CD8-positive, alpha-beta memory T cell (primary cell): ENCODE measurements at regions of chr16 and their contacts with region 1.

Region 1: GRCh38 chr16:11619327-11619851 is 32.7 kb upstream of the LITAF start:
- DNase-seq: peak in 4 of 5 donors; percentile 13 to 68 (median 58)
- H3K4me3 ChIP-seq: peak overlapping the region; percentile 5
- H3K4me3 Mint-ChIP-seq: peak overlapping the region; percentile 1 to 79 (median 74)
- H3K27ac ChIP-seq: peak overlapping the region; percentile 6
- H3K27ac Mint-ChIP-seq: peak overlapping the region; percentile 91 to 98 (median 96)
- H3K4me1 ChIP-seq: peaks cover 80% of the 10 kb centered on the region
- H3K4me1 Mint-ChIP-seq: peaks cover 52 to 75% (median 58%) of the 10 kb centered on the region in 3 donors
- H3K27me3 ChIP-seq: no peaks in the 10 kb centered on the region
- H3K27me3 Mint-ChIP-seq: no peaks in the 10 kb centered on the region

Region 2: GRCh38 chr16:11556945-11557720 is 62.3 kb before region 1 on chr16:
- CTCF ChIA-PET with region 1: no interaction called
- POLR2A ChIA-PET with region 1: no interaction called
- DNase-seq: peak in 3 of 5 donors; percentile 58 to 61 (median 58)
- H3K4me3 ChIP-seq: no peak overlapping the region
- H3K4me3 Mint-ChIP-seq: peak overlapping the region; percentile 62 to 89 (median 75)
- H3K27ac ChIP-seq: peak overlapping the region; percentile 25
- H3K27ac Mint-ChIP-seq: peak overlapping the region; percentile 77 to 100 (median 98)
- H3K4me1 ChIP-seq: peaks cover 72% of the 10 kb centered on the region
- H3K4me1 Mint-ChIP-seq: peaks cover 65 to 86% (median 73%) of the 10 kb centered on the region in 3 donors
- H3K27me3 ChIP-seq: no peaks in the 10 kb centered on the region
- H3K27me3 Mint-ChIP-seq: peaks cover 0 to 8% of the 10 kb centered on the region in 2 donors

Region 3: GRCh38 chr16:11639925-11640899 is 20.8 kb after region 1 on chr16:
- CTCF ChIA-PET with region 1: interaction called, 11 read pairs
- POLR2A ChIA-PET with region 1: interaction called, 6 read pairs
- DNase-seq: no peak
- H3K4me3 ChIP-seq: no peak overlapping the region
- H3K4me3 Mint-ChIP-seq: peak overlapping the region in 1 of 7 donors; percentile 26
- H3K27ac ChIP-seq: no peak overlapping the region
- H3K27ac Mint-ChIP-seq: peak overlapping the region in 5 of 8 donors; percentile 23 to 80 (median 43)
- H3K4me1 ChIP-seq: peaks cover 16% of the 10 kb centered on the region
- H3K4me1 Mint-ChIP-seq: peaks cover 17 to 21% (median 20%) of the 10 kb centered on the region in 3 donors
- H3K27me3 ChIP-seq: no peaks in the 10 kb centered on the region
- H3K27me3 Mint-ChIP-seq: peaks cover 0 to 5% of the 10 kb centered on the region in 2 donors